Left colon (tissue), 2 donors: ENCODE measurements at regions of chr6 and their contacts with region 1.

Region 1: DNA sequence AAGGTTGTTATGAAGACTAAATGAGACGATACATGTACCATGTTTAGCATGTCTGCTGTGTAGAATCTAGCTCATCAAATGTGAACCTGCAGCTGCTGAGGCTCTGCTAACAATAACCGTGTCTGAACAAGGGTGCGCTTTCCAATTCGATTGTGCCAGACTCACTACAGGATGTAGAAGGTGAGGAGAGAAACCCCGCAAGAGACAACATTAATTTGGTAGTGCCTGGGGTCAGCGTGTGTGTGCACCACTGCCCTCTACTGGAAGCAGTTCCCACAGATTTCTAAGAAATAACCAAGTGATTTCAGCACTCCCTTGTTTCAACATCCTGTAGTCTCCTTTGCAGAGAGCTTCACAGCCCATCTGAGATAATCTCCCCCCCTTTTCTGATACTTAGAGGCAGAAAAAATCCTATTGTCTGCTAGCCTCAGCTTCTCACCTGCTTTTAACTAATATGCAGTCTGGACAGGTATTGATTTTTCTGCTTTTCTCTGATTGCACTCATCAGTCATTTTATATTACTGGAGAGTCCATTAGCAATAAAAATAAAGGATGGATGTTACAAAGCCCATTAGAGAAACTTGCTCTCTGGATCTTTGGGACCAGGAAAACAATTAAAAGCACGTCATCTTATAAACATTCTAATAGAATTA is 96.7 kb upstream of the BACH2 start:
- DNase-seq: peak in 1 of 2 donors; percentile 66
- ATAC-seq: peak; percentile 58

Region 2: GRCh38 chr6:89952686-89953085 is 440.7 kb before region 1 on chr6:
- intact Hi-C with region 1: loop called in 1 of 2 experiments (anchors 5 kb)
- DNase-seq: no peak
- ATAC-seq: no peak

Region 3: GRCh38 chr6:89970609-89971337 is 422.6 kb before region 1 on chr6:
- intact Hi-C with region 1: loop called in 1 of 2 experiments (anchors 10 kb)
- DNase-seq: peak in 1 of 2 donors; percentile 15
- ATAC-seq: peak; percentile 84

Region 4: DNA sequence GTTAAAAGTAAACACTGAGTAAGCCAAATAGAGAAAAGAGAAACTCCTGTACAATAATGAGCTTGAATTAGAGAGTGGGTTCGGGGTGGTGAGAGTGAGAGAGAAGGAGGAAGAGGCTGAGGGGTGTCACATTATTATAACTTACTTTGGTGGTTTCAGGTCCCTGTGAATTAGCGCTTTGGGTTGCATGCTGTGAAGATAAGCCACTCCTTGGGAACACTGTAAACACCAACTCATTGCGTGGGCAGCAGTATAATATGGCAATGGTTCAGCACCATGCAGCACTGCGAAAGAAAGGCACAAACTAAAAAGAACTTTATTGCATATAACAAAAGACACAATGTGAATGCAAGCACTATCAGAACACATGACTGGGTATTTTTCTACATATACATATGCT is 166.6 kb after region 1 on chr6:
- intact Hi-C with region 1: no loop called
- DNase-seq: no peak
- ATAC-seq: no peak